ENCODE measurements at regions of chr2 and their contacts with region 1.

Region 1: GRCh38 chr2:46010925-46011490 is 286.2 kb upstream of the EPAS1 start:
- DNase-seq: peak; percentile 56
- CTCF ChIP-seq: peak; percentile 19

Region 2: GRCh38 chr2:46451131-46451711 is 440.2 kb after region 1 on chr2:
- in situ Hi-C with region 1: loop called (anchors 10 kb)
- DNase-seq: no peak
- CTCF ChIP-seq: no peak

Region 3: GRCh38 chr2:46632349-46632748 is 621.3 kb after region 1 on chr2:
- in situ Hi-C with region 1: loop called (anchors 25 kb)
- DNase-seq: no peak
- CTCF ChIP-seq: peak; percentile 9

Measured in GM13976 (cell line).